ENCODE measurements at regions of chr13 and their contacts with region 1.

Region 1: DNA sequence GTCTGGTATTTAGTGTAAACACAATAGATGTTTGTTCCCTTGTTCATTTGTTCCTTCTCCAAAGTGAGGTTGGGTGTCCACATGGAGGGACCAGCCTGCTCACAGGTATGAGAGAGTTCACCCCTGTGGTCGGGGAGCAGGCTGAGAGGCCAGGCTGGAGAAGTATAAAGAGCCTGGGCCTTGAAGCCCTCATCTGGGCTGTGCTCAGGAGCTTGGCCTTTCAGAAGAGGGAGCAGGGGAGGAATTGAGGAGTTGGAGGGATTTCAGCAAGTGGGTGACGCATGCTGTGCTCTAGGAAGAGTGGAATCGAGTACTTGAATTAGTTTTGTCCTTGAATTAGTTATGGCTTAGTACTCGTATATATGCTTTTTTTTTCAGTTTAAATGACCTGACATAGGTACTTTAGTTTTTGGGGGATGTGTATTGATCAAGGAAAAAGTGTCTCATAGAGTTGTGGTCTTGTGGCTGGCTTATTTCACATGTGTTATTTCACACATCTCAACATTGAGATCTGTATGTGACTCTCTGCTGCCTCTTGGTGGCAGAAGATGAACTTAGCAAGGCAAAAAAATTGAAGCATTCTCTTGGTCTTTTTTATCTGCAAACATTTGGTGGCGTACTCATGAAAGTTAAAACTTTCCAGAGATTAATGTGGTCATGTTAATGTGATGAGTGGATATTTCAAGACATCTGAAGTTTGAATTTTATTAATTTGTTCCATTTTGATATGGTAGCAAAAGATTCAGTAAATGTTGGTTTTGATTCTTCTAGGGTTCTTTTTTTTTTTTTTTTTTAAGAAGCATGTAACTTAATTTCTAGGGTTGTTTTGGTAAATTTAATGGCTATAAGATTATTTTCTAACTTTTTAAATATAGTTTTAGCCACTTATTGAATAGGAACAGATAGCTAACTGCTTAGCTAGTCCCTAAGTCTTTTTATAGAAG is 54.3 kb downstream of the SLAIN1 start:
- DNase-seq: peak; percentile 25
- H3K4me3 ChIP-seq: no peak overlapping the region
- H3K27ac ChIP-seq: no peak overlapping the region
- H3K4me1 ChIP-seq: no peaks in the 10 kb centered on the region
- H3K27me3 ChIP-seq: no peaks in the 10 kb centered on the region
- CTCF ChIP-seq: peak; percentile 65

Region 2: GRCh38 chr13:77506874-77507273 is 244.9 kb before region 1 on chr13:
- intact Hi-C with region 1: no loop called
- DNase-seq: no peak
- H3K4me3 ChIP-seq: no peak overlapping the region
- H3K27ac ChIP-seq: no peak overlapping the region
- H3K4me1 ChIP-seq: no peaks in the 10 kb centered on the region
- H3K27me3 ChIP-seq: no peaks in the 10 kb centered on the region
- CTCF ChIP-seq: no peak

Region 3: GRCh38 chr13:77595166-77595810 is 156.5 kb before region 1 on chr13:
- intact Hi-C with region 1: loop called (anchors 2 kb)
- DNase-seq: no peak
- H3K4me3 ChIP-seq: no peak overlapping the region
- H3K27ac ChIP-seq: no peak overlapping the region
- H3K4me1 ChIP-seq: no peaks in the 10 kb centered on the region
- H3K27me3 ChIP-seq: no peaks in the 10 kb centered on the region
- CTCF ChIP-seq: no peak

Region 4: GRCh38 chr13:78060966-78061365 is 309.2 kb after region 1 on chr13:
- intact Hi-C with region 1: no loop called
- DNase-seq: peak; percentile 24
- H3K4me3 ChIP-seq: no peak overlapping the region
- H3K27ac ChIP-seq: no peak overlapping the region
- H3K4me1 ChIP-seq: no peaks in the 10 kb centered on the region
- H3K27me3 ChIP-seq: no peaks in the 10 kb centered on the region
- CTCF ChIP-seq: no peak

Region 5: DNA sequence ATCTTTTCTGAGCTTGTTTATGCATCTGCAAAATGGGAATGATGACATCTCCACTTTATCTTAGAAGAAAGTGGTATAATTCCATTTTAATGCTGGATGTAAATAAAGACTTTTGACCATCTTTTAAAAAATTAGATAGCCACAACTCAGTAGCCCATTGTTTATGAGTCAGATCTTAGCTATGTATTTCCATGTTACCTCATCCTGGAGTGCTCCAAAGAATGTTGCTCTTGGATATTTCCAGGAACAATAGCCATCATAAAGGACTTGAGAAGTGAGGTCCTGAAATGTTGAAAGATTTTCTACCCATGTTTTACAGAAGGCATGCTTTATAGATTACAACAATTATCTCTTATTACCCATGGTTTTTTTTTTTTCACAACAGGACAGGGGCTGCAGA is 396.1 kb after region 1 on chr13:
- intact Hi-C with region 1: no loop called
- DNase-seq: no peak
- H3K4me3 ChIP-seq: no peak overlapping the region
- H3K27ac ChIP-seq: no peak overlapping the region
- H3K4me1 ChIP-seq: no peaks in the 10 kb centered on the region
- H3K27me3 ChIP-seq: no peaks in the 10 kb centered on the region
- CTCF ChIP-seq: no peak

Measured in colonic mucosa (tissue), 4 donors.